HepG2 (cell line): ENCODE measurements at regions of chr14 and their contacts with region 1.

Region 1: DNA sequence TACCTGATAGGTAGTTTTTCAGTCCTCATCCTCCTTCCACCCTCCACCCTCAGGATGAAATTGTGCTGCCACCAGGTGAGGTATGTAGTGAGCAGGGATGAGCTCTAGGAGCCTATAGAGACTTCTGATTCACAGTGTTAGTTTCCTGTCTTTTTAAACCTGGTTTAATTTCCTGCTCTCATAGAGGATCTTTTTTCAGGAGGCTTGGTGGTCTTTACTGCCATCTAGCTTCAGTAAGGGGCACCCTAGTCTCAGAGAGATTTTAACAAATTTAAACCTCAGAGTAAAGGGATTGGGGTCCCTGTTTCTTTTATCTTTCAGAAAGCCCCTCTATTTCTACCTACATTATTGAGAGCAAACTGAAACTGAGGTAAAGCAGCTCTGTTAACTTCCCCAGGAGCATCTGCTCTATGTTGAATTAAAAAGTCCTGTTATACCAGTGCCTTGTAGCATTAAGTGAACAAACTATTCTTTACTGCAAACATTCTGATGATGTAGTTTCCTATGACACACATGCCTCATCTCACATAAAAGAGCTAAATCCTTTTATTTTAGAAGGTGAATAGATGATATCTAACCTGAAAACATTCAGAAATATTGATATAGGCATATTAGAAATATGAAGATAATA is 172.2 kb upstream of the DDHD1 start:
- DNase-seq: no peak
- ATAC-seq: no peak
- H3K4me3 ChIP-seq: no peak overlapping the region
- H3K27ac ChIP-seq: no peak overlapping the region
- H3K4me1 ChIP-seq: no peaks in the 10 kb centered on the region
- H3K27me3 ChIP-seq: no peaks in the 10 kb centered on the region
- CTCF ChIP-seq: peak; percentile 40
- EP300 ChIP-seq: no peak
- POLR2A ChIP-seq: no peak
- RAD21 ChIP-seq: no peak

Region 2: DNA sequence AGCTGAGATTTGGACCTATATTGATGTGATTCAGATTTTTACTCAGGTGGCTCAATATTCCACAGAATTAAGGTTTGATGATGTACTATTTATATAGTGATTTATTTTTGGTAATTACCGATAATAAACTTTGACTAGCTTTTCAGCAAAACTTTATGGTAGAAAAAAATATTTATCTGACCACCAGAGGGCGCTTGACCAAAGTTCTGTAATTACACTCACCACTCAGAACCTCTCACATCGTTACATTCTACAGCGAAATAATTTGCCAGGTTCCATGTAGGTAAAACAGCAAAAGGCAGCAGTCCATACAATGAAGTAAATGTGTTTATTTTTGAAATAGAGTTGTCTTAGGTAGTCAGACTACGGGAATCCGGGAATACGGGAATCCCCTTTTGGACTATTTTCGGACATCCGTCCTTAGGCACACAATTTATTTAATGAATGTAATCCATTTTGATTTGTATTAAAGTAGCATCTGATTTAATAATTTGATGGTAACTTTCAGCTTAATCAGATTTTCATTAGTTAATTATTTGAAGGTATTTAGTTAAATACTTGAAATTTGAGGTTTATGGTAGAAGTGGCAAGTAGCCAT is 29.2 kb before region 1 on chr14:
- CTCF ChIA-PET with region 1: no interaction called
- POLR2A ChIA-PET with region 1: no interaction called
- in situ Hi-C with region 1: no loop called
- intact Hi-C with region 1: loop called (anchors 5 kb)
- DNase-seq: peak; percentile 17
- ATAC-seq: no peak
- H3K4me3 ChIP-seq: no peak overlapping the region
- H3K27ac ChIP-seq: no peak overlapping the region
- H3K4me1 ChIP-seq: no peaks in the 10 kb centered on the region
- H3K27me3 ChIP-seq: peaks cover 0 to 18% of the 10 kb centered on the region in 2 experiments; a peak in 1 of 5 replicates
- CTCF ChIP-seq: peak; percentile 57
- EP300 ChIP-seq: no peak
- POLR2A ChIP-seq: no peak
- RAD21 ChIP-seq: no peak

Region 3: GRCh38 chr14:53619691-53620231 is 294.5 kb after region 1 on chr14:
- CTCF ChIA-PET with region 1: no interaction called
- POLR2A ChIA-PET with region 1: no interaction called
- in situ Hi-C with region 1: no loop called
- intact Hi-C with region 1: no loop called
- DNase-seq: no peak
- ATAC-seq: peak; percentile 56; the same call in 2 of the 3 replicates
- H3K4me3 ChIP-seq: no peak overlapping the region
- H3K27ac ChIP-seq: no peak overlapping the region
- H3K4me1 ChIP-seq: peaks cover 47% of the 10 kb centered on the region
- H3K27me3 ChIP-seq: no peaks in the 10 kb centered on the region
- CTCF ChIP-seq: no peak
- EP300 ChIP-seq: no peak
- POLR2A ChIP-seq: no peak
- RAD21 ChIP-seq: no peak